ENCODE measurements at regions of chr2 and their contacts with region 1.

Region 1: DNA sequence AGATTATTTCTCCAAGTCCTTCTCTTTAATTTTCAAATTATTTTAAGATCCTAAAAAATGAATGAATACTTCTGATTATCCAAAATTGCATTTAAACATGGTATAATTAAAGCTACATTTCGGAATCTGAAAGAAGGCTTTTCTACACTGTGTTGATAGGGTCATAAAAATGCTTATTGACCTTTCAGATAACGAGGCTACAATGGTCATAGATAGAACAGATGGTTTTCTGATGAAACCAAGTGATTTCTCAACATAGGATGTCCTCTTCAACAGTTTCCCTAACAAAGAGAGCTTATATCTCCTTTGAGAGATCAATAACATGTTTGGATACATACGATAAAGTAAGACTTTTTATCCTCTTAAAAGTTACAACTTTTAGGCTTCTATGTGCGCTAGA is 201.1 kb downstream of the PTH2R start:
- DNase-seq: no peak
- ATAC-seq: no peak
- H3K4me3 ChIP-seq: no peak overlapping the region
- H3K27ac ChIP-seq: no peak overlapping the region
- H3K4me1 ChIP-seq: no peaks in the 10 kb centered on the region
- H3K27me3 ChIP-seq: no peaks in the 10 kb centered on the region
- CTCF ChIP-seq: no peak

Region 2: DNA sequence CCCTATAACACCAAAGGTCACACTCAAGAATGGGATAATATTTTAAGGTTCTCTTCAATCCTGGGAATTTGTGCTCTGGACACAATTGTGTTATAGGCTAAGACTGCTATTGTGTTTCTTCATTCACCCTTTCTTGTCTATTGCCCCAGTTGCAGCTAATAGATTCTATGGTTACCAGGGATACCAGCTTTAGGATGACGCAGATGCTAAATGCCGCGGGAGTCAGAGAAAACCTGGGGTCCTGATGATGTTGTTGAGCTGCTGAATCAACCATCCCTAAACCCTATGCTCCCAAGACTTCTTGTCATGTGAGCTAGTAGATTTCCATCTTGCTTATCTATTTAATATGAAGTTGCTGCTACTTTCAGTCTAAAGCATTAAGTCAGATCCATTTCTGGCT is 488.8 kb before region 1 on chr2:
- CTCF ChIA-PET with region 1: no interaction called
- POLR2A ChIA-PET with region 1: no interaction called
- in situ Hi-C with region 1: no loop called
- intact Hi-C with region 1: no loop called
- DNase-seq: no peak
- ATAC-seq: no peak
- H3K4me3 ChIP-seq: no peak overlapping the region
- H3K27ac ChIP-seq: no peak overlapping the region
- H3K4me1 ChIP-seq: no peaks in the 10 kb centered on the region
- H3K27me3 ChIP-seq: no peaks in the 10 kb centered on the region
- CTCF ChIP-seq: no peak

Region 3: GRCh38 chr2:208556983-208557484 is 50.7 kb before region 1 on chr2:
- CTCF ChIA-PET with region 1: no interaction called
- POLR2A ChIA-PET with region 1: no interaction called
- in situ Hi-C with region 1: no loop called
- intact Hi-C with region 1: no loop called
- DNase-seq: no peak
- ATAC-seq: no peak
- H3K4me3 ChIP-seq: no peak overlapping the region
- H3K27ac ChIP-seq: no peak overlapping the region
- H3K4me1 ChIP-seq: no peaks in the 10 kb centered on the region
- H3K27me3 ChIP-seq: no peaks in the 10 kb centered on the region
- CTCF ChIP-seq: no peak

Region 4: DNA sequence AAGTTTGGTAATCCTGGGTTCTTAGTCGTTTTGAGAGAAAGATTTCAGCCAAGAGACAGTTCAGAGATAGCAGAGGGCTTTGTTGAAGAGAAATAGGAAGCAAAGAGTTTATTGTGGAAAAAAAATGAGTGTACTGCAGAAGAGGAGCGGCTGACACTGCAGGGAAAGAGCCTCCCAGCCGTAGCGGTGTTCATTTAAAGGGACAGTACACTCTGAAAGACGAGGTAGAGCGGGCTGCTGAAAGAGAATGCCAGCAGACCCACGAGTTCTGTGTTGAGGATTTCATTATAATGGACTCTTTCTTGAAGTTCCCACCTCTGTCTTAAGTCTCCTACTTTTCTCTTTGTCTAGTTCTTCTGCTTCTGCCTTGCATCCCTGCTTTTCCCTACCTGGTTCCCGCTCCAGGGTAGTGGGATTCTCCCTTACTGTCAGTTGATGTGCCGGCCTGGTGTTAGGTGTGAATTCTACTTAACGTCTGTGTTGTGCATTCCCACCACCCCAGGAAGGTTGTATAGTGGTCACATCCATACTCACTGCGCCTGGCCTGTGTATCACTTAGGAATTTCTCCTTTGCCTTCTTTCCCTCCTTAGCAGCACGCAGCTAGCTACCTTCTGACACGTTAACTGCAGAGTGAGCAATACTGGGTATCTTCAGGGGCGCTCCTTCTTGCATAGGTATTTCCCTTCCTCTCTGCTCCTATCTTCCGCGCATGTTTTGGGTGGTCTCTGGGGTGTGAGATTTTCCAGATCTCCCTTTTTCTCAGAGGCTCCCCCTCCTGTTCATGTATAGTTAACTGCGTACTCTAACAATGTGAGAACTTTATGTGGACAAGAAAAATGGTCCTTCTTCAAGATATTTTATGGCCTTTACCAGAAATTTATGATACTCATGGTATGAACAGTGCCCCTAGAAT is 36.6 kb before region 1 on chr2:
- CTCF ChIA-PET with region 1: no interaction called
- POLR2A ChIA-PET with region 1: no interaction called
- in situ Hi-C with region 1: no loop called
- intact Hi-C with region 1: no loop called
- DNase-seq: no peak
- ATAC-seq: no peak
- H3K4me3 ChIP-seq: no peak overlapping the region
- H3K27ac ChIP-seq: no peak overlapping the region
- H3K4me1 ChIP-seq: no peaks in the 10 kb centered on the region
- H3K27me3 ChIP-seq: no peaks in the 10 kb centered on the region
- CTCF ChIP-seq: peak; percentile 24

Region 5: DNA sequence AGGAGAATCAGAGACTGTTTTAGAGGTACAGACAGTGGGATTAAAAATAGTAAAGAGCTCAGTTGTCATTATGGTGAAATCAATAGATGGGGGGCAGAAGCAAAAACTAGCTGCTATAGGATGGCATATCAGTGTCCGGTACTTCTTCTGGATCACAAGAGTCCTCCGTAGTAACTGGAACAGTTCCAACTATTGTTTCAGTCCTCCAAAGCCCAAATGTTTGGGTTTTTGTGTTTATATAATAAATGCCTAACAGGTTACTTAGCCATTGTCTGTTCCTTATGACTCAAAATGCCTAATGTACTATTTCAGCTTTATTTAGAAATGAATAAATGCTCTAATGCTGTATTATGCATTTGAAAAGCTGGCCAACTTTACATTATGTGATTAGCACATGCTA is 200.1 kb after region 1 on chr2:
- CTCF ChIA-PET with region 1: no interaction called
- POLR2A ChIA-PET with region 1: no interaction called
- in situ Hi-C with region 1: no loop called
- intact Hi-C with region 1: no loop called
- DNase-seq: no peak
- ATAC-seq: no peak
- H3K4me3 ChIP-seq: no peak overlapping the region
- H3K27ac ChIP-seq: no peak overlapping the region
- H3K4me1 ChIP-seq: no peaks in the 10 kb centered on the region
- H3K27me3 ChIP-seq: no peaks in the 10 kb centered on the region
- CTCF ChIP-seq: no peak

Region 6: GRCh38 chr2:209933499-209934483 is 1326.1 kb after region 1 on chr2:
- CTCF ChIA-PET with region 1: interaction called, 11 read pairs
- POLR2A ChIA-PET with region 1: no interaction called
- in situ Hi-C with region 1: no loop called
- intact Hi-C with region 1: no loop called
- DNase-seq: no peak
- ATAC-seq: no peak
- H3K4me3 ChIP-seq: peak overlapping the region in 1 of 2 experiments; percentile 2; a peak in 1 of 4 replicates
- H3K27ac ChIP-seq: no peak overlapping the region
- H3K4me1 ChIP-seq: no peaks in the 10 kb centered on the region
- H3K27me3 ChIP-seq: no peaks in the 10 kb centered on the region; the same call in 1 of the 2 replicates
- CTCF ChIP-seq: peak; percentile 21; the same call in 1 of the 2 replicates

Measured in Panc1 (cell line).